ENCODE measurements at regions of chr3 and their contacts with region 1.

Region 1: GRCh38 chr3:40179016-40179415 is 130.5 kb upstream of the EIF1B start:
- DNase-seq: peak; percentile 57

Region 2: GRCh38 chr3:39762537-39763070 is 416.4 kb before region 1 on chr3:
- in situ Hi-C with region 1: no loop called
- DNase-seq: no peak

Region 3: DNA sequence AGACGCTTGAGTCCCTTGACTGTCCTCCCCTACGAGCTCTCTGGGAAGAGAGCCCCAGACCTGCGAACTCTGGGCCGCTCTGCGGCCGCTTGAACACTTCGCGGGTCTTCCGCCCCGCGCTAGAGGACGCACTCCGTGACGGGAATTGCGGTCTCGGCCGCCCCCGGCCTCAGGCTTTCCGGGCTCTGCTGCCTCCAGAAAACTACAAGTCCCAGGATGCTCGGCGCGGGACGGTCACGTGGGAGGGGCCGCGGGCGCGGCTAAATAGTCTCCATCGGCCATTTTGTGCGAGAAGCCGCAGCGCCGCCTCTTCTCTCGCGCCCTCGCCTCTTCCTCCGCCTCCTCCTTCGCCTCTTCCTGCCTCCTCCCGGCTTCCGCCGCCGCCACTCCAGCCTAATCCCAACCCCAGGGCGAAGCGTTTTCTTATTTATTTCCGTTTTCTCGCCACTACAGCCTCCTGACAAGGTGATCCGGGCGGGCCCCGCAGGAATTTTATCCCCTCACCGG is 130.5 kb after region 1 on chr3 and contains the start of gene EIF1B:
- in situ Hi-C with region 1: loop called (anchors 25 kb)
- DNase-seq: peak; percentile 99